GM13977 (cell line): ENCODE measurements at regions of chr18 and their contacts with region 1.

Region 1: DNA sequence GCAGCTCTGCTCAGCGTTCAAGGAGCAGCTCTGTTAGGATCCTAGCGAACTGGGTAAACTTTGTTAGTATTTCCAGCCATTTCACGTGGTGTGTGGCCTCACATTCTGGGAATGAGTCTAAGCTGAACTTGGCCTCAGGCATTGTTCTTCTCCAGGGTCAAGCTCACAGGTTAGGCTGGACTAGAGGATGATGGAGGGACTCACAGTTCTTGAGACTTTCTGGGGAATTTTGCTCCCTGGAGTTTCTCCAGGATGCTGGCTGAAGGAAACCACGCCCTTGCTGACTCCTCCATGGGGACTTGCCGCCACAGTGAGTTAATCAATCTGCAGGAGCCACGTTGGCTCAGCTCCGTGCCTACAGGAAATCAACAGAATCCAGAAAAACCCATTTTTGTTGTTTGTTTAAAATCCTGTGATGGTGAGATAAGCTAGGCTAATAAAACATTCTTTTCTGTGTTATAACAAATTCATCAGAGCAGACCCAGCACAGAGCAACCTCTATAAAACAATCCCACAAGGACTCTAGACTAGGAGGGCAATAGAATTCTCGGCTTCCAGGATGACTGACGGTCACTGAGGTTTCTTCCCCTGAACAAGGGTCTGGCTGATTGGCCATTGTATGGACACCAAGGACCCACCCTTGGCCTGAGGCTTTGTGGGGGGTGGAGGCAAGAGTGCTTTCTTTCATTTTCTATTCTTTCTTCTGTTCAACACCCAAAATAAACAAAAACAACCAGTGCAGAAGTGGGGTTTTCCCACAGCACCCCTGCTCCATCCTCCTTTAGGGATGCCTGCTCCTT is 12.7 kb downstream of the CNDP1 start:
- DNase-seq: no peak
- CTCF ChIP-seq: no peak

Region 2: DNA sequence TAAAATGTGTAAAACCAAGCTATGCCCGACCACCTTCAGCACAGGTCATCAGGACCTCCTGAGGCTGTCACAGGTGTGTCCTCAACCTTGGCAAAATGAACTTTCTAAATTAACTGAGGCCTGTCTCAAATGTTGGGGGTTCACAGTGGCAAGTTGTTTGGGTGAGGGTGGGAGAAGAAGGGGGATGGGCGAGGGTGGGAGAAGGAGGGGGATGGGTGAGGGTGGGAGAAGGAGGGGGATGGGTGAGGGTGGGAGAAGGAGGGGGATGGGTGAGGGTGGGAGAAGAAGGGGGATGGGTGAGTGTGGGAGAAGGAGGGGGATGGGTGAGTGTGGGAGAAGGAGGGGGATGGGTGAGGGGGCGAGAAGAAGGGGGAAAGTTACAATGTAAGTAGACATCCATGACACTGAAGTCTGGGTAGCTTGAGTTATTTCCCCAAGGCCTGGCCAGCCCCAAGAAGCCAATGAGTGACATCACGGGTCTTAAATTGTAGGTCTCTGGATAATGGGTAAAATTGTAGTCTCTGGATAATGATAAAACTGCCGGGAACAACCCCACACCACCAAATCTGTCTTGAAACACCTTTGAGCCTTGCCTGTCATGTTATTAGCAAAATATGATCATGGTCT is 342.3 kb before region 1 on chr18:
- in situ Hi-C with region 1: loop called (anchors 25 kb)
- DNase-seq: no peak
- CTCF ChIP-seq: no peak